GM13976 (cell line): ENCODE measurements at regions of chr1 and their contacts with region 1.

Region 1: GRCh38 chr1:151098126-151098525 is 27.6 kb downstream of the GABPB2 start:
- DNase-seq: no peak
- CTCF ChIP-seq: no peak

Region 2: GRCh38 chr1:151156515-151156819 is 58.3 kb after region 1 on chr1 and contains the start of gene TNFAIP8L2:
- in situ Hi-C with region 1: loop called (anchors 10 kb)
- DNase-seq: peak; percentile 69
- CTCF ChIP-seq: no peak